ENCODE measurements at regions of chr22 and their contacts with region 1.

Region 1: GRCh38 chr22:37965940-37966664 is 12.6 kb downstream of the POLR2F start:
- DNase-seq: no peak
- H3K4me3 ChIP-seq: no peak overlapping the region
- H3K27ac ChIP-seq: no peak overlapping the region
- H3K4me1 ChIP-seq: peaks cover 0 to 27% (median 18%) of the 10 kb centered on the region in 4 donors
- H3K27me3 ChIP-seq: no peaks in the 10 kb centered on the region
- CTCF ChIP-seq: no peak
- EP300 ChIP-seq: no peak
- POLR2A ChIP-seq: no peak

Region 2: GRCh38 chr22:37817705-37818408 is 148.2 kb before region 1 on chr22:
- intact Hi-C with region 1: loop called (anchors 1 kb)
- DNase-seq: peak; percentile 90
- H3K4me3 ChIP-seq: peak overlapping the region in 3 of 4 donors; percentile 32 to 48 (median 47)
- H3K27ac ChIP-seq: peak overlapping the region in 3 of 4 donors; percentile 41 to 65 (median 55)
- H3K4me1 ChIP-seq: peaks cover 0 to 19% (median 16%) of the 10 kb centered on the region in 4 donors
- H3K27me3 ChIP-seq: peaks cover 0 to 35% (median 17%) of the 10 kb centered on the region in 3 donors
- CTCF ChIP-seq: peak; percentile 93 to 97 (median 96)
- EP300 ChIP-seq: no peak
- POLR2A ChIP-seq: no peak

Region 3: DNA sequence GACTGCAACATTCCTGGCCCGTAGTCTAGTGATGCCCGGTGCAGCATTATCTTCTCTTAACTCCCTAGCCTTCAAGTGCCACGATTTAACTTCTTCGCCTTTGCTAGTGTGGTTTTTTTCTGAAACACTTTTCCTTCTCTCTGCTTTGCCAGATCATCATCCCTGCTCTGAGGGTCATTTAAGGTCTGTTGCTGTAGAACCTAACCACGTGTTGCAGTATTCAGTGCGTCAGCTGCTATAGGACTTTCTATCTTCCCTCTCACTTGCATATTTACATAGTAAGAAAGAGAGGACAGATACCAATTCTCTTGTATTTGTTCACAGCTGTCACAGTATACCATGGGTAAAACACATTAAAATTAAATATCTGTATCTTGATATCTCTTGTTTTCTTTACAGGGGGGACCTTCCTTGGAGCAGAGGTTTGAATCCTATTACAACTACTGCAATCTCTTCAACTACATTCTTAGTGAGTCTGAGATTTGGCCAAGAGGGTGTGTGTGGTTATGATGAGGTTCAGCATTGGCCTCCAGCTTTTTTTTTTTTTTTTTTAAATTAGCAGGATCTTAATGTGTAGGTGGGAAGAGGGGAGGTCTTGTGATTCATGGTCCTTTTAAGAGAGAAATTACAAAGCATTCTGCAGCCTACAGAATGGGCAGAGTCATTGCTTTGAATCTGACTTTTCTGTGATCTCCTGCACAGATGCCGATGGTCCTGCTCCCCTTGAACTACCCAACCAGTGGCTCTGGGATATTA is 103.4 kb before region 1 on chr22:
- intact Hi-C with region 1: loop called (anchors 5 kb)
- DNase-seq: no peak
- H3K4me3 ChIP-seq: no peak overlapping the region
- H3K27ac ChIP-seq: peak overlapping the region in 3 of 4 donors; percentile 46 to 74 (median 65)
- H3K4me1 ChIP-seq: peaks cover 0 to 23% (median 10%) of the 10 kb centered on the region in 4 donors
- H3K27me3 ChIP-seq: no peaks in the 10 kb centered on the region
- CTCF ChIP-seq: no peak
- EP300 ChIP-seq: no peak
- POLR2A ChIP-seq: no peak

Region 4: DNA sequence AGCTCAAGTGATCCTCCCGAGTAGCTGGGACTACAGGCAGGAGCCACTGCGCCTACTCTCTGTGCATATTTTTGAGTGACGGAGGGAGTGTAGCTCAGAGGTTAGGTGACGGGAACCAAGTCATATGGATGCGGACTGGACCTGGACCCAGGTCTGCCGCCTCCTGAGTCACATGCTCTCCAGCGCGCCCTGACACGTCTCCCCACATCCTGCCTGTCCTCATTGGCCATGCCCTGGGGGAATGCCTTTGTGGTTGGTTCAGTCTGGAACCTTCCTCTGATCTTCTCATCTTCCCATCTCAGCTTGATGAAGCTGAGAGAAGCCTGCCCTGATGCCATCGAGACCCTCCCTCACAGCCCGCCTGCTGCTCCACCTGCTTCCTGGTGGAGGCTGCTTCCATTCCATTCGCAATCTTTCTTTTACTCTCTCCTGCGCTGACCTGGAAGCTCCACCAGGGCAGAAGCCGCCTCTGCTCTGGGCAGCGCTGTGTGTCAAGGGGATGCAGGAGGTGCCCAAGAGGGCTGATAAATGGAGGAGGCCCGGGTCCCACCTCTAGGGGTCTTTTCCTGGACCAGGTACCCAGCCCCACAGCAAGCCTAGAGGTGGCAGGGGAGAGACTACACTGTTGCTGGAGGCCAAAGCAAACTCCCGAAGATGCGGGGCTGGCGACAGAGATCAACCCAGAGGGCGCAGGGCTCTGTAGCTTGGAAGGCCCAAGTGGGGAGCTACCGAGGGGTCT is 158.3 kb after region 1 on chr22:
- intact Hi-C with region 1: no loop called
- DNase-seq: no peak
- H3K4me3 ChIP-seq: no peak overlapping the region
- H3K27ac ChIP-seq: no peak overlapping the region
- H3K4me1 ChIP-seq: no peaks in the 10 kb centered on the region
- H3K27me3 ChIP-seq: no peaks in the 10 kb centered on the region
- CTCF ChIP-seq: no peak
- EP300 ChIP-seq: no peak
- POLR2A ChIP-seq: no peak